T-cell (primary cell): ENCODE measurements at regions of chr3 and their contacts with region 1.

Region 1: DNA sequence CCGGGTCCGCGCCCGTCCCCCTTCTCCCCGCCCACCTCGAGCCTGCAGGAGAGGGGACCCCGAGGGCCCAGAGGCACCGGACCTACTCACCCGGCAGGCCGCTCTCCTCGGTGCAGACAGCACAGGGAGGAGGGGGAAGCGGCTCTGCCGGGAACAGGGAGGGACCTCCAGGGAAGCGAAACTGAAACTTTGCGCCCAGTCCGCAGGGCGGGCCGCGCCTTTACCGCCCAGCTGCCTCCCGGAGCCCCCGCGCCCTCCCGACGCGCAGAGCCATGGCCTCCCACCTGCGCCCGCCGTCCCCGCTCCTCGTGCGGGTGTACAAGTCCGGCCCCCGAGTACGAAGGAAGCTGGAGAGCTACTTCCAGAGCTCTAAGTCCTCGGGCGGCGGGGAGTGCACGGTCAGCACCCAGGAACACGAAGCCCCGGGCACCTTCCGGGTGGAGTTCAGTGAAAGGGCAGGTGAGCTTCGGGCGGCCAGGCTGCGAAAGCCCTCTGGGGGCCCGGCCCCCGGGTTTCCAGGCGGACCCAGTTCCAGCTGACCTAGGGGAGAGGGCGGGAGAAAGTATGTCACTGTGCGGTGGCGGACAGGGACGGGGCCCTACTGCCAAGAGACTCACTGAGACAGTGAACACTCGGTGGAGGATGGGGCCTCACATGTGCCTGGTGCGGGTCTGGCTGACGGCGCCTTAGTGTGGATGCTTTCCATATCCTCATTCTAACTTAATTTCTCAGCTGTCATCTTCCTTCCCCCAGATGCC is at the starts of genes DTX3L and PARP9:
- DNase-seq: peak; percentile 46 to 87 (median 70)
- ATAC-seq: peak; percentile 88 to 93 (median 90)
- H3K4me3 ChIP-seq: peak within 1 kb of the TSS; percentile 76 to 82
- H3K4me3 Mint-ChIP-seq: peak within 1 kb of the TSS; percentile 92 to 98 (median 95)
- H3K27ac ChIP-seq: peak within 1 kb of the TSS; percentile 88
- H3K27ac Mint-ChIP-seq: peak within 1 kb of the TSS; percentile 97 to 100
- H3K4me1 ChIP-seq: peaks cover 20 to 48% of the 10 kb centered on the region in 2 experiments
- H3K4me1 Mint-ChIP-seq: peaks cover 80 to 90% (median 81%) of the 10 kb centered on the region in 3 donors
- H3K27me3 ChIP-seq: no peaks in the 10 kb centered on the region
- H3K27me3 Mint-ChIP-seq: no peaks in the 10 kb centered on the region
- total RNA-seq, gene DTX3L: 35.1 to 56.2 (median 49.8) TPM
- total RNA-seq, gene PARP9: 20.2 to 43.0 (median 24.3) TPM

Region 2: GRCh38 chr3:122188737-122189136 is 375.6 kb before region 1 on chr3:
- CTCF ChIA-PET with region 1: no interaction called
- POLR2A ChIA-PET with region 1: no interaction called
- DNase-seq: no peak
- ATAC-seq: no peak
- H3K4me3 ChIP-seq: no peak overlapping the region
- H3K4me3 Mint-ChIP-seq: no peak overlapping the region
- H3K27ac ChIP-seq: no peak overlapping the region
- H3K27ac Mint-ChIP-seq: no peak overlapping the region
- H3K4me1 ChIP-seq: no peaks in the 10 kb centered on the region
- H3K4me1 Mint-ChIP-seq: peaks cover 2 to 3% (median 3%) of the 10 kb centered on the region in 3 donors
- H3K27me3 ChIP-seq: peaks cover 8 to 15% of the 10 kb centered on the region in 2 experiments
- H3K27me3 Mint-ChIP-seq: peaks cover 32 to 53% of the 10 kb centered on the region in 2 donors

Region 3: DNA sequence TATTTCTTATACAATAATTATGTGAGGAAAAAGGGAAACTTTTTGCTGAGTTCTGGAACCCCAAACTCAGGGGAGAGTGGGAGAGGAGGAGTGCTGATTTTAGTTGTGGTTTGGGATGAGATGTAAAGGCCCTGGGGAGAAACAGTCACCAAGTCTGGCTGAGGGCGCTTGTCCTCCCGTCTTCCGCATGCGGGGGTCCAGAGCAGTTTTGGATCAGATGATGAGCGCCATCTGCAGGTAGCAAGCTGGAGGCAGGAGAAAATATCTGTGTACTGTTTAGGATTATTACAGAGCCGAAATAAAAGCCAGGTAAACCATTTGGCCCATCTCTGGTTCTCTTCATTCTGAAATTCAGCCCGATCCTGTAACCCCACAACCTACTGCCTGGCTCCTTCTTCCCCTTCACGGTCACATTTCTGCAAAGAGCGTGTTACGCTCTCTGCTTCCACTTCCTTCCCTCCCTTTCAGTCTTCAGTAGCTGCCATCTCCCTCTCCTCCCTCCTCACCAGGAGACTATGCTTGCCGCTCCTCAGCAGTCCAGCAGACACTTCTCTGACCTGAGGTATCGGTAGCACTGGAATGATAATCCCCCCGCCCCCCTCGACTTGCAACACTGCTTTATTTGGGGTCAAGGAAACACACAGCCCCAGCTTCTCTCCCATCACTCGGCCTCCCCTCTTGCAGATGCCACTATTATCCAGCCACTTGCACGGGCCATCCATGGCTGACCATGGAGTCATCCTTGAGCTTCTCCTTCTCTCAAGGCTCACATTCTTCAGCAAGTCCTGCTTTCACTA is 114.9 kb after region 1 on chr3:
- CTCF ChIA-PET with region 1: interaction called, 26 to 112 read pairs
- POLR2A ChIA-PET with region 1: interaction called in 1 of 2 experiments, 4 read pairs
- DNase-seq: peak; percentile 64 to 93 (median 78)
- ATAC-seq: peak; percentile 63 to 71 (median 67)
- H3K4me3 ChIP-seq: peak overlapping the region in 1 of 2 donors; percentile 96
- H3K4me3 Mint-ChIP-seq: peak overlapping the region; percentile 93 to 97 (median 94)
- H3K27ac ChIP-seq: peak overlapping the region; percentile 96
- H3K27ac Mint-ChIP-seq: peak overlapping the region; percentile 99 to 100
- H3K4me1 ChIP-seq: peaks cover 12 to 35% of the 10 kb centered on the region in 2 experiments
- H3K4me1 Mint-ChIP-seq: peaks cover 55 to 56% (median 56%) of the 10 kb centered on the region in 3 donors
- H3K27me3 ChIP-seq: no peaks in the 10 kb centered on the region
- H3K27me3 Mint-ChIP-seq: no peaks in the 10 kb centered on the region

Region 4: GRCh38 chr3:123297627-123297899 is 733.2 kb after region 1 on chr3:
- CTCF ChIA-PET with region 1: no interaction called
- POLR2A ChIA-PET with region 1: no interaction called
- DNase-seq: no peak
- ATAC-seq: no peak
- H3K4me3 ChIP-seq: no peak overlapping the region
- H3K4me3 Mint-ChIP-seq: no peak overlapping the region
- H3K27ac ChIP-seq: no peak overlapping the region
- H3K27ac Mint-ChIP-seq: no peak overlapping the region
- H3K4me1 ChIP-seq: no peaks in the 10 kb centered on the region
- H3K4me1 Mint-ChIP-seq: no peaks in the 10 kb centered on the region
- H3K27me3 ChIP-seq: peaks cover 0 to 25% of the 10 kb centered on the region in 2 experiments
- H3K27me3 Mint-ChIP-seq: peaks cover 8 to 11% of the 10 kb centered on the region in 2 donors